ENCODE measurements at regions of chr18 and their contacts with region 1.

Region 1: GRCh38 chr18:46555724-46556123 is 101.3 kb downstream of the LOXHD1 start:
- DNase-seq: peak; percentile 53 to 60 (median 56)
- ATAC-seq: peak; percentile 97
- H3K4me3 ChIP-seq: no peak overlapping the region
- H3K27ac ChIP-seq: no peak overlapping the region
- H3K4me1 ChIP-seq: no peaks in the 10 kb centered on the region
- H3K27me3 ChIP-seq: no peaks in the 10 kb centered on the region; a peak in 1 of 5 replicates
- CTCF ChIP-seq: peak; percentile 59 to 78 (median 74)
- EP300 ChIP-seq: no peak
- POLR2A ChIP-seq: no peak
- RAD21 ChIP-seq: peak; percentile 55 to 73

Region 2: DNA sequence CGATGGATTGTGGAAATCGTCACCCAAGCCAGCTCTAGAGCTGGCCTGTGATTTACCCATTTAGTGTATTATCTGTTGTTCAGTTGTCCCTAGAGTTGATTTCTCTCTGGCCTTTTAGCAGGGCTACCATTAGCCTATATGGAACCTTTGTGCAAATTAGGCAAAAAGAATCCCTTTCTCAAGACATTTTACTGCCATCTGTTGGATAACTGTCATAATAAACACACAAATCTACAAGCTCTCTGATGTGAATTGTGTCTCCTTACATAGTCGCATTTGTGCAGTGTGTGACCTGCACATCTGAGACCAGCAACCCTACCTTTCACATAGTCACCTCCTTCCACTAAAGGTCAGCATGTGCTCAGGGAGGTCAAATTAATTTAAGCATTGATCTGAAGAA is 67.3 kb after region 1 on chr18:
- CTCF ChIA-PET with region 1: no interaction called
- POLR2A ChIA-PET with region 1: no interaction called
- in situ Hi-C with region 1: no loop called
- intact Hi-C with region 1: loop called (anchors 10 kb)
- DNase-seq: peak in 1 of 4 experiments; percentile 1
- ATAC-seq: no peak
- H3K4me3 ChIP-seq: no peak overlapping the region
- H3K27ac ChIP-seq: no peak overlapping the region
- H3K4me1 ChIP-seq: peaks cover 0 to 5% of the 10 kb centered on the region in 2 experiments; a peak in 2 of 5 replicates
- H3K27me3 ChIP-seq: no peaks in the 10 kb centered on the region; a peak in 1 of 5 replicates
- CTCF ChIP-seq: peak in 1 of 3 experiments; percentile 32; a peak in 1 of 6 replicates
- EP300 ChIP-seq: no peak
- POLR2A ChIP-seq: no peak
- RAD21 ChIP-seq: peak; percentile 5 to 32; a peak in 2 of 4 replicates

Region 3: DNA sequence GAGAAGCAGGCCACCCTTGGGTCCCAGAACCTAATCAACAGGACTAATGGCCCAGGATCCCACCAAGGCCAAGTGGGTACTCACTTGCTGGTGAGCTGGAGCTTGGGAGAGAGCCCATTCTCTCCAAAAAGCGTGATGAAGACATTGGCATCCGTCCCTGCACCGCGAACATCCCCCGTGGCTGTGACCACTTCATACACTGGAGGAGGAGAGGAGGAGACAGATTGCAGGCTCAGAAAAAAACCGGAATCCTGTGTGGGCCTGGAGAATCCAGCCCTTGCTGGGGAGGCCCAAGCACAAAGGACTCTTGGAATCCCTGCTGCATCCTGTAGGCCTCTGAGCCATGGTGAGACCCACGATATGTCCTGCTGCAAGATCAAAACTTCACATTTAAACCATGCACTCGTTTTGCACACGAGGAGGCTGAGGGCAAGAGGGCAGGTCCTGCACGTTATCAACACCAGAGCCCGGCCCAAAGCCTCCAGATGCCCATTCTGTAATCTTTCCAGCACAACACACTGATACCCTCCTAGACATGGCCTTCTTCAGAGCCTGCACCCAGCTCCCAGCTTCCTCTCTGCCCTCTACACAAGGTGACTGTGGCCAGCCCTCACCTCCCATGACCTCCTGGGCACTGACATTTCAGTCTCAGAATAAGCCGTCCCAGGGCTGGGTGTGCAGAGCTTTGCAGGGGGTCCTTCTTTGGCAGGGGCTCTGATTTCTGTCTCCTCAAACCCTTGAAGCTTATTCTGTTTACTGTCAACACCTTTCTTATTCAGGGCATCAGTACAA is 93.5 kb after region 1 on chr18:
- CTCF ChIA-PET with region 1: no interaction called
- POLR2A ChIA-PET with region 1: no interaction called
- in situ Hi-C with region 1: no loop called
- intact Hi-C with region 1: no loop called
- DNase-seq: no peak
- ATAC-seq: no peak
- H3K4me3 ChIP-seq: no peak overlapping the region
- H3K27ac ChIP-seq: no peak overlapping the region
- H3K4me1 ChIP-seq: no peaks in the 10 kb centered on the region; a peak in 1 of 5 replicates
- H3K27me3 ChIP-seq: no peaks in the 10 kb centered on the region; a peak in 1 of 5 replicates
- CTCF ChIP-seq: no peak
- EP300 ChIP-seq: no peak
- POLR2A ChIP-seq: no peak
- RAD21 ChIP-seq: no peak

Region 4: GRCh38 chr18:46660955-46661749 is 105.4 kb after region 1 on chr18:
- CTCF ChIA-PET with region 1: interaction called, 7 read pairs
- POLR2A ChIA-PET with region 1: no interaction called
- in situ Hi-C with region 1: no loop called
- intact Hi-C with region 1: loop called (anchors 1 kb)
- DNase-seq: no peak
- ATAC-seq: no peak
- H3K4me3 ChIP-seq: no peak overlapping the region
- H3K27ac ChIP-seq: no peak overlapping the region
- H3K4me1 ChIP-seq: peaks cover 0 to 4% of the 10 kb centered on the region in 2 experiments; a peak in 2 of 5 replicates
- H3K27me3 ChIP-seq: peaks cover 0 to 10% of the 10 kb centered on the region in 2 experiments; a peak in 2 of 5 replicates
- CTCF ChIP-seq: no peak
- EP300 ChIP-seq: no peak
- POLR2A ChIP-seq: no peak
- RAD21 ChIP-seq: no peak

Measured in K562 (cell line).